ENCODE measurements at regions of chrX and their contacts with region 1.

Region 1: GRCh38 chrX:103540145-103540544 is 20.9 kb upstream of the RAB40A start:
- DNase-seq: peak; percentile 43
- H3K4me3 ChIP-seq: peak overlapping the region in 1 of 3 experiments; percentile 12
- H3K27ac ChIP-seq: peak overlapping the region; percentile 91
- H3K4me1 ChIP-seq: peaks cover 38% of the 10 kb centered on the region
- H3K27me3 ChIP-seq: peaks cover 3% of the 10 kb centered on the region
- CTCF ChIP-seq: no peak

Region 2: DNA sequence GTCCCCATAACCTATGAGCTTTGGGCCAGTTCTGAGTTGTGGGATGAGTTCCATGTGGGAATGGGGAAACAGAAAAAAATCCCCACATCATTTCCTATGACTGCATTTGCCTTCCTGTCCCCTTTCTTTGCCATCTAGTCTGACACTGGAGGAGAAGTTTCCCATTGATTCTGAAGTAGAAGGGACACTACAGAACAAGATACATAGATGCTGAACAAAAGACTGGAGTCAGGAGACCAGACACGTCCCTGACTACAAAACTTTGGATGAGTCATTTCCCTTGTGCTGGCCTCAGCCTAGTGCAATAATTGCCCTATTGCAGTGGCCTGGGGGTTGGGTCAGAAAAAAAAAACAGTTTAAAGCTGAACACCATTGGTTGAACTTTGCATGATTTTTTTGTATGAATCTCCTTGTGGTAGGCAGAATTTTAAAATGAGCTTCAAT is 141.7 kb before region 1 on chrX:
- CTCF ChIA-PET with region 1: no interaction called
- dilution Hi-C with region 1: no loop called
- in situ Hi-C with region 1: no loop called
- intact Hi-C with region 1: no loop called
- DNase-seq: peak; percentile 79
- H3K4me3 ChIP-seq: no peak overlapping the region
- H3K27ac ChIP-seq: peak overlapping the region; percentile 55
- H3K4me1 ChIP-seq: peaks cover 17% of the 10 kb centered on the region
- H3K27me3 ChIP-seq: no peaks in the 10 kb centered on the region
- CTCF ChIP-seq: no peak

Region 3: GRCh38 chrX:103585411-103586313 is 45.5 kb after region 1 on chrX and contains the start of gene TCEAL4:
- CTCF ChIA-PET with region 1: no interaction called
- dilution Hi-C with region 1: no loop called
- in situ Hi-C with region 1: no loop called
- intact Hi-C with region 1: loop called (anchors 5 kb)
- DNase-seq: peak; percentile 13
- H3K4me3 ChIP-seq: peak within 1 kb of the TSS; percentile 59 to 61 (median 59)
- H3K27ac ChIP-seq: peak within 1 kb of the TSS; percentile 57
- H3K4me1 ChIP-seq: peaks cover 3% of the 10 kb centered on the region
- H3K27me3 ChIP-seq: no peaks in the 10 kb centered on the region
- CTCF ChIP-seq: no peak
- total RNA-seq, gene TCEAL4: 33.3 to 98.1 TPM

Region 4: GRCh38 chrX:103607364-103608305 is 67.5 kb after region 1 on chrX and contains the start of gene TCEAL3:
- CTCF ChIA-PET with region 1: no interaction called
- dilution Hi-C with region 1: no loop called
- in situ Hi-C with region 1: loop called in 1 of 2 experiments (anchors 10 kb)
- intact Hi-C with region 1: no loop called
- DNase-seq: no peak
- H3K4me3 ChIP-seq: peak within 1 kb of the TSS; percentile 69
- H3K27ac ChIP-seq: peak within 1 kb of the TSS; percentile 59
- H3K4me1 ChIP-seq: no peaks in the 10 kb centered on the region
- H3K27me3 ChIP-seq: no peaks in the 10 kb centered on the region
- CTCF ChIP-seq: no peak
- total RNA-seq, gene TCEAL3: 9.3 to 41.2 TPM

Region 5: GRCh38 chrX:103789004-103789403 is 248.9 kb after region 1 on chrX:
- CTCF ChIA-PET with region 1: no interaction called
- dilution Hi-C with region 1: no loop called
- in situ Hi-C with region 1: no loop called
- intact Hi-C with region 1: no loop called
- DNase-seq: no peak
- H3K4me3 ChIP-seq: no peak overlapping the region
- H3K27ac ChIP-seq: no peak overlapping the region
- H3K4me1 ChIP-seq: peaks cover 5% of the 10 kb centered on the region
- H3K27me3 ChIP-seq: no peaks in the 10 kb centered on the region
- CTCF ChIP-seq: no peak

Measured in mammary epithelial cell (primary cell).